ENCODE measurements at regions of chr3 and their contacts with region 1.

Region 1: GRCh38 chr3:56688191-56688590 is 5.1 kb upstream of the TASOR start:
- DNase-seq: no peak
- ATAC-seq: no peak
- H3K4me3 ChIP-seq: no peak overlapping the region
- H3K4me3 Mint-ChIP-seq: no peak overlapping the region
- H3K27ac ChIP-seq: no peak overlapping the region
- H3K27ac Mint-ChIP-seq: no peak overlapping the region
- H3K4me1 ChIP-seq: peaks cover 4 to 22% of the 10 kb centered on the region in 2 experiments
- H3K4me1 Mint-ChIP-seq: peaks cover 14 to 23% (median 14%) of the 10 kb centered on the region in 3 donors
- H3K27me3 ChIP-seq: no peaks in the 10 kb centered on the region
- H3K27me3 Mint-ChIP-seq: no peaks in the 10 kb centered on the region

Region 2: DNA sequence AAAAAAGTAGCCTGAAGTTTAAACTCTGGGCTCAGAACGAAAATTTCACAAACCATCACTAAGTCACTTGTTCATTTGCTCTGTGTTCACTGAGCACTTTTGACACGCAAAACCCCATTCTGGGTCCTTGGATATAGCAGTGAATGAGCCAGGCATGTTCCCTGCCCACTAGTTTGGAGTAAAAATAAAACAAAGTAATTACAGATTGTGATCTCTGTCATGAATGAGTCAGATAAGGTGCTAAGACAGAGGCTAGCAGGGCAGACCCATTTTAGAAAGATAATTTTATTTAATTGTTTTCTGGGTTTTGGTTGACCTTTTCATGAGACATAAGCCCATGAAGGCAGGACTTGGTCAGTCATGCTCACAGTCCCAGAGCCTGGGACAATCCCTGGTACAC is 197.7 kb after region 1 on chr3:
- CTCF ChIA-PET with region 1: interaction called in 1 of 2 experiments, 11 read pairs
- POLR2A ChIA-PET with region 1: no interaction called
- DNase-seq: no peak
- ATAC-seq: no peak
- H3K4me3 ChIP-seq: no peak overlapping the region
- H3K4me3 Mint-ChIP-seq: peak overlapping the region in 1 of 3 donors; percentile 79
- H3K27ac ChIP-seq: peak overlapping the region; percentile 3
- H3K27ac Mint-ChIP-seq: peak overlapping the region; percentile 76 to 83
- H3K4me1 ChIP-seq: peaks cover 28 to 49% of the 10 kb centered on the region in 2 experiments
- H3K4me1 Mint-ChIP-seq: peaks cover 69 to 87% (median 84%) of the 10 kb centered on the region in 3 donors
- H3K27me3 ChIP-seq: no peaks in the 10 kb centered on the region
- H3K27me3 Mint-ChIP-seq: no peaks in the 10 kb centered on the region